ENCODE measurements at regions of chr18 and their contacts with region 1.

Region 1: GRCh38 chr18:47100214-47100831 is 50.0 kb downstream of the HDHD2 start:
- DNase-seq: peak in 8 of 10 donors; percentile 31 to 90 (median 64)

Region 2: GRCh38 chr18:46856973-46857372 is 243.3 kb before region 1 on chr18:
- intact Hi-C with region 1: no loop called
- DNase-seq: no peak

Region 3: GRCh38 chr18:47050468-47050867 is 49.9 kb before region 1 on chr18:
- intact Hi-C with region 1: loop called (anchors 5 kb)
- DNase-seq: peak in 1 of 10 donors; percentile 26

Region 4: GRCh38 chr18:47081578-47081977 is 18.7 kb before region 1 on chr18:
- intact Hi-C with region 1: no loop called
- DNase-seq: no peak

Measured in posterior cingulate gyrus (tissue), 11 donors.